ENCODE measurements at regions of chr7 and their contacts with region 1.

Region 1: DNA sequence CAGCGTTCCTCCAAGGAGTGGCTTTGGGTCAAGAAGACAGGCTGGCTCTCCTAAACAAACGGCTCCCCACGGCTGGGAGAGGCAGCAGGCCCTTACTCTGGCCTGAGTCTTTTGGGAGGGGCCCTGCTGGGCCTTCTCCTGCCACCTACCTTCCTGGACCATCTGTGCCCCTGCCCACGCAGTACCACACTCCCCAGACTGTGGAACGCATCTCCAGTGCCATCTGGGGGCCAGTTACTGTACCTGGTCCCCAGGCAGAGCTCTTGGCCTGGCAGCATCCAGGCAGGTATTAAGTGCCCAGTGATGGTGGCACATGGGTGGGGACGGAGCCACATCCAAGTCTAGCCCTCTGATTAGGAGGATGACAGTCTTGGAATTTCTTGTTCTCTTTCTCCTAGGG is 14.4 kb downstream of the ALKBH4 start:
- DNase-seq: peak; percentile 74
- H3K4me3 ChIP-seq: no peak overlapping the region
- H3K27ac ChIP-seq: peak overlapping the region; percentile 64
- H3K4me1 ChIP-seq: peaks cover 47% of the 10 kb centered on the region
- CTCF ChIP-seq: peak; percentile 81

Region 2: DNA sequence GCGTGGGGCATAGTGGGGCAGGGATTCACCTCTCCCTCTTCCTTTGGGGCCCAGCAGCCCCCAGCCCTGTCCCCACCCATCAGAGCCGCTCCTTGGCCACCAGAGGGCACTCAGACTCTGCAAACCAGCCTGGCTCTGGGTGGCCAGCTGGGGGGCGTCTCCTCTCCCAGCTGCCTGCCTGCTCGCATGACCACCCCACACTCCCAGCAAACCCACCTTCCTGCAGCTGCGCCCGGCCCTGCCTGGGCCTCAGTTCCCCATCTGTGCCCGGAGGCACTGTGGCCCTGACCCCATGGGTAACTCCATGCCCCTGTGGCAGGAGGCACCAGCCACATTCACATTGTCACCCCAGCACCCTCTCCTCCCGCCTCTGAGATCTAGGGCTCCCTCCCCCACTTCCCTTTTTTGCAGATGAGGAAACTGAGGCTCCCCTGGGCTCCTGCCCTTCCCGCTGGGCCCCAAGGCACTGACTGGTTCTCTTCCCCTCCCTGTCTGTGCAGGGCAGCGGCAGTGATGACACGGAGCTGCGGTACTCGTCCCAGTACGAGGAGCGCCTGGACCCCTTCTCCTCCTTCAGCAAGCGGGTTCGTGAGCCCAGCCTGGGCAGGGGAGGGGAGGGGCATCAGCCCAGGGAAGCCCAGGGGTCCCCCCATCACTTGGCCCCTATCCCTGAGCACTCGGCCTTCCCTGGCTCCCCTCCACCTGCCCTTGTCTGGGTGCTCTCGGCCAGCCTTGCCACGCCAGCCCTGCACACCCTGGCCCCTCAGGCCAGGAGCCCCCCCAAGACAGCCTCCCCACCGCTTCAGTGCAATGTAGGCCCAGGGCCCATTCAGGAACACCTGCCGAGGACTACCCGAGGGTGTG is 170.5 kb before region 1 on chr7:
- CTCF ChIA-PET with region 1: no interaction called
- POLR2A ChIA-PET with region 1: no interaction called
- intact Hi-C with region 1: loop called (anchors 2 kb)
- DNase-seq: peak; percentile 88
- H3K4me3 ChIP-seq: peak overlapping the region; percentile 50
- H3K27ac ChIP-seq: peak overlapping the region; percentile 87
- H3K4me1 ChIP-seq: peaks cover 49% of the 10 kb centered on the region
- CTCF ChIP-seq: peak; percentile 95

Region 3: DNA sequence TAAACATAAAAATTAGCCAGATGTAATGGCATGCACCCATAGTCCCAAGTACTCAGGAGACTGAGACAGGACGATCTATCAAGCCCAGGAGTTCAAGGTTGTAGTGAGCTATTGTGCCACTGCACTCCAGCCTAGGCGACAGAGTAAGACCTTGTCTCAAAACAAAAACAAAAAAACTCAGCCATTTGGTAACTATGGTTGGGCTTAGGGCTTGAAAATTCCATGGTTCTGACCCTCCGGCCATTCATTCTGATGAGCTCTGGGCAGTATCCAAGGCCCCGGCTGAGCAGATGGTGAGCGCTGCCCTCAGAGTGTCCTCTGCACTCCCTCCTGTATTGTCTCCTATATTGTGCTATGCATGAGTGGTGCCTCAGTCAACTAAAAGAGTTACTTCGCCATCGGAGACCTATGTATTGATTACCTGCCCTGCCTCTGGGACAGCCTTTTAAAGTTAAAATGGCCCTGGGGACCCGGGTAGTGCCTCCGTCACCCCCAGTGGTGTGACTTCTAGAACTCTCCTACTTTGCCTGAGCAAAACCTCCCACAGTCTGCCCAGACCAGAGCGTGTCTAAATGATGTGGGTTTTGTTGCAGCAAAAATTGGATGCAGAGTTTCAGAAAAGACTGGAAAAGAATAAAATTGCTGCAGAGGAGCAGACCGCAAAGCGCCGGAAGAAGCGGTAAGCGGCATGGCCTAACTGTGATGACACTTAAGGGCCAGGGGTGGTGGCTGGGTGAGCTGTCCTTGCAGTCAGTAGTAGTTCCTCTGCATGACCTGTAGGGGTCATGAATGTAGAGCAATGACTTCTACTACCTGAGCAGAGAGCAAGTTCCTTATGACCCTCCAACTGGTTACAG is 46.0 kb before region 1 on chr7:
- CTCF ChIA-PET with region 1: interaction called, 11 read pairs
- POLR2A ChIA-PET with region 1: interaction called, 4 read pairs
- intact Hi-C with region 1: loop called (anchors 1 kb)
- DNase-seq: peak; percentile 89
- H3K4me3 ChIP-seq: no peak overlapping the region
- H3K27ac ChIP-seq: peak overlapping the region; percentile 62
- H3K4me1 ChIP-seq: peaks cover 55% of the 10 kb centered on the region
- CTCF ChIP-seq: peak; percentile 82

Region 4: GRCh38 chr7:102412548-102412947 is 37.7 kb before region 1 on chr7:
- CTCF ChIA-PET with region 1: interaction called, 7 read pairs
- POLR2A ChIA-PET with region 1: interaction called, 6 read pairs
- intact Hi-C with region 1: loop called (anchors 1 kb)
- DNase-seq: peak; percentile 63
- H3K4me3 ChIP-seq: no peak overlapping the region
- H3K27ac ChIP-seq: peak overlapping the region; percentile 15
- H3K4me1 ChIP-seq: peaks cover 69% of the 10 kb centered on the region
- CTCF ChIP-seq: peak; percentile 85